Heart left ventricle (tissue), 16 donors: ENCODE measurements at regions of chr18 and their contacts with region 1.

Region 1: GRCh38 chr18:49645841-49646351 is 84.0 kb downstream of the LIPG start:
- DNase-seq: peak in 4 of 5 donors; percentile 68 to 81 (median 76)
- ATAC-seq: peak; percentile 74 to 85 (median 83)
- H3K4me3 ChIP-seq: no peak overlapping the region
- H3K27ac ChIP-seq: peak overlapping the region in 7 of 12 donors; percentile 7 to 51 (median 25)
- H3K4me1 ChIP-seq: peaks cover 0 to 21% (median 2%) of the 10 kb centered on the region in 12 donors
- H3K27me3 ChIP-seq: no peaks in the 10 kb centered on the region
- CTCF ChIP-seq: no peak
- POLR2A ChIP-seq: no peak

Region 2: GRCh38 chr18:49582579-49582978 is 63.3 kb before region 1 on chr18:
- intact Hi-C with region 1: no loop called
- DNase-seq: no peak
- ATAC-seq: no peak
- H3K4me3 ChIP-seq: no peak overlapping the region
- H3K27ac ChIP-seq: no peak overlapping the region
- H3K4me1 ChIP-seq: no peaks in the 10 kb centered on the region
- H3K27me3 ChIP-seq: peaks cover 0 to 7% (median 0%) of the 10 kb centered on the region in 9 donors
- CTCF ChIP-seq: no peak
- POLR2A ChIP-seq: no peak

Region 3: DNA sequence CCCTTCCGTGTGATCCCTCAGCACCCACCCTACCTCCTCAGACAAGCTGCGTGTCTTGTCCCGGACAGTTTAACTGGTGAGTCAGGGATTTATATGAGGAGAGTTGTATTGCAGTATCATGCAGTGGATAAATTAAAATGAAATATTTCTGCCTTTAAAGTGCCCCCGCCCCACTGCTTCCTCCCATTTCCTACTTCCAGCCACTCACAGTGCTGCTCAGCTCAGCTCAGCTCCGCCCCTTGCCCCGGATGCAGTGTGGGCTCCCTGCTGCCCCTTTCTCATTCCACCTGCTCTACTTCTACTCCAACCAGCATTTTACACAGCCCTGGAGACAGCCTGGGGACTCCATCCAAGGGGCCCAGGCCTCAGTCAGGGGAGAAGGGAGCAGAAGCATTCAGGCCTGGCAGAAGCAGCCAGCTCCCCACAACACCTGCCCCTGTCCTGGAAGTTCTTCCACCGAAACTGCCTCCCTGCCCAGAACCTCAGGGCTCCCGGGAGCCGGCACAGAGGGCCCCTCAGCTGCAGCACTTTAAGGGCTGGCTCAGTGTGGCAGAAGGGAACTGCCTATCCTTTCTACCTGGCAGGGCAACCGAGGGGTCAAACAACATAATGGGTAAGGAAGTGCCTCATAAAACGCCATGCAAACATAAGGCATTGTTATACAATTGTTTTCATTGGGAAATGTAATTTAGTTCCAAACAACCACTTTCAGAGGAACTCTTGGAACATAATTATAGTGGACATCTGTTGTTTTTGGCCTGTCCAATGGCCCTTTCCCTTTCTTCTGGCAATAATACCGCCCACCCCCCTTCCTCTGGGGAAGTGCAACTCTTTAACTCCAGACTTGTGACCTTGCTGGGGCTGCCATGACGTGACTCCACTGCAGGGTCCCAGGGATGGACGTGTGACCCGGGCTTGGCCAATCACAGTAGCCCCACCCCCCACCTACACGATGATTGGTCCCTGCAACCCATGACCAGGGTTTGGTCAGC is 18.3 kb after region 1 on chr18:
- intact Hi-C with region 1: loop called in 1 of 10 experiments (anchors 2 kb)
- DNase-seq: peak in 4 of 5 donors; percentile 61 to 84 (median 66)
- ATAC-seq: peak; percentile 43 to 68 (median 57)
- H3K4me3 ChIP-seq: no peak overlapping the region
- H3K27ac ChIP-seq: peak overlapping the region in 10 of 12 donors; percentile 7 to 63 (median 45)
- H3K4me1 ChIP-seq: peaks cover 0 to 28% (median 6%) of the 10 kb centered on the region in 12 donors
- H3K27me3 ChIP-seq: peaks cover 0 to 20% (median 0%) of the 10 kb centered on the region in 9 donors
- CTCF ChIP-seq: no peak
- POLR2A ChIP-seq: no peak

Region 4: GRCh38 chr18:49716035-49716434 is 70.1 kb after region 1 on chr18:
- intact Hi-C with region 1: no loop called
- DNase-seq: no peak
- ATAC-seq: no peak
- H3K4me3 ChIP-seq: no peak overlapping the region
- H3K27ac ChIP-seq: no peak overlapping the region
- H3K4me1 ChIP-seq: no peaks in the 10 kb centered on the region
- H3K27me3 ChIP-seq: peaks cover 0 to 8% (median 0%) of the 10 kb centered on the region in 9 donors
- CTCF ChIP-seq: no peak
- POLR2A ChIP-seq: no peak

Region 5: GRCh38 chr18:49728542-49728941 is 82.6 kb after region 1 on chr18:
- intact Hi-C with region 1: loop called in 1 of 10 experiments (anchors 10 kb)
- DNase-seq: peak in 2 of 5 donors; percentile 32 to 68
- ATAC-seq: no peak
- H3K4me3 ChIP-seq: no peak overlapping the region
- H3K27ac ChIP-seq: no peak overlapping the region
- H3K4me1 ChIP-seq: peaks cover 0 to 42% (median 6%) of the 10 kb centered on the region in 12 donors
- H3K27me3 ChIP-seq: no peaks in the 10 kb centered on the region
- CTCF ChIP-seq: peak; percentile 18 to 64 (median 46)
- POLR2A ChIP-seq: no peak

Region 6: DNA sequence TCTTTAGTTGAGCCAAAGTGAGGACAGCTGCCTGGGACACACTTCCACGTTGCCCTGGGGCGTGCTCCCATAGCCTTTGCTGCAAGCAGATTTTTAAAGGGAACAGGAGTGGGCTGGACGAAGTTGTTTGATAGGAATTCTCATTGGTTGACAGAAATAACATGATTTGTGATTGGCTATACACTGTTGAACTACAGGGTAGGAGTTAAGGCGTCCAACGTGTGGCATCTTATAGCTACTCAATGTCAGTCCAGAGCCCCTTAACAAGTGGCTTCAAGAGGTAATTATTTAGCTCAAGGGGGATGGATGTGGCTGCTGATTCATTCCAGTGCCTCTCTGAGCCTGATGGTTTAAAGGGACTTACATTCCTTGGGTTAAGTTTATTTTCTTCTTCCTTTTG is 102.0 kb after region 1 on chr18:
- intact Hi-C with region 1: no loop called
- DNase-seq: no peak
- ATAC-seq: no peak
- H3K4me3 ChIP-seq: no peak overlapping the region
- H3K27ac ChIP-seq: no peak overlapping the region
- H3K4me1 ChIP-seq: no peaks in the 10 kb centered on the region
- H3K27me3 ChIP-seq: peaks cover 0 to 19% (median 2%) of the 10 kb centered on the region in 9 donors
- CTCF ChIP-seq: no peak
- POLR2A ChIP-seq: no peak